AG04450 (cell line): ENCODE measurements at regions of chr3 and their contacts with region 1.

Region 1: DNA sequence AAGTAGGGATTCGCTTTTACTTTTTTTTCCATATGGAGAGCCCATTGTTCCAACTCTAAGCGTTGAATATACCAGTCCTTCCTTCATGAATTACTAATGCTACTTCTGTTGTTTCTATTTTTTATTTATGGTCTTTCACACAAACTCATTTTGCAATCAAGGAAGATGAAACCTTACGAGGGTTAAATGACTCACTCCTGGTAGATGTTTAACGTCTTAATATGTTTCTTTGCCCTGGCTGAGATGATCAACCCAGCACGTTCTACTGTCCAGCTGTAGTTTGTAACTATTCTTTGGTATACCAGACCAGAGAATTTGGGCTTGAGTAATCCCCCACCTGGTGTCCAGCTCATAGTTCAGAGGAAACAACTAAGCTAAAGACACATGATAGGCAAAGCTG is 23.1 kb downstream of the CDCP1 start:
- DNase-seq: peak; percentile 94
- H3K4me3 ChIP-seq: no peak overlapping the region
- H3K27ac ChIP-seq: peak overlapping the region; percentile 97
- H3K27me3 ChIP-seq: no peaks in the 10 kb centered on the region
- CTCF ChIP-seq: no peak

Region 2: GRCh38 chr3:44427683-44428082 is 695.3 kb before region 1 on chr3:
- CTCF ChIA-PET with region 1: no interaction called
- POLR2A ChIA-PET with region 1: interaction called, 14 read pairs
- DNase-seq: no peak
- H3K4me3 ChIP-seq: no peak overlapping the region
- H3K27ac ChIP-seq: no peak overlapping the region
- H3K27me3 ChIP-seq: peaks cover 15% of the 10 kb centered on the region
- CTCF ChIP-seq: no peak

Region 3: GRCh38 chr3:44729384-44729910 is 393.6 kb before region 1 on chr3 and contains the start of gene ZNF501:
- CTCF ChIA-PET with region 1: no interaction called
- POLR2A ChIA-PET with region 1: no interaction called
- DNase-seq: peak; percentile 67
- H3K4me3 ChIP-seq: peak within 1 kb of the TSS; percentile 74
- H3K27ac ChIP-seq: peak within 1 kb of the TSS; percentile 53
- H3K27me3 ChIP-seq: no peaks in the 10 kb centered on the region
- CTCF ChIP-seq: no peak
- polyA plus RNA-seq, gene ZNF501: 3.9 and 4.3 TPM in 2 replicates

Region 4: DNA sequence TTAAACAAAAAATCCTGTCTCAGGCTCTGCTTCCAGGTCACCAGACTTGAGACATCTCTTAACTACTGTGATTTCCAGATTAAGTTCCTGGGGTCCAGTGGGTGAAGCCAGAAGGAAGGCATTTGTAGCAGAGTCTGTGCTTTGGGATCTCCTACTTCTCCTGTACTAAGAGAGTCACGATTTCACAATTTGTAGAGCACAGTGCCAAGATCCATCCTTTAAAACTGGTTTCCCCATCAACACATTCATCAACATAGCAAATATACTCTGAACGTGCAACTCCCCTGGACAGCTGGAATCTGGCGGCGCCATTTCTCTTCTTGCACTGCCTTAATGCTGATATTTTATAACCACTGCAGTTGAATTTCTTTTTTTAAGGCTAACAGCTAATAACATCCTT is 10.1 kb before region 1 on chr3:
- CTCF ChIA-PET with region 1: no interaction called
- POLR2A ChIA-PET with region 1: interaction called, 11 read pairs
- DNase-seq: no peak
- H3K4me3 ChIP-seq: no peak overlapping the region
- H3K27ac ChIP-seq: peak overlapping the region; percentile 3
- H3K27me3 ChIP-seq: no peaks in the 10 kb centered on the region
- CTCF ChIP-seq: no peak

Region 5: DNA sequence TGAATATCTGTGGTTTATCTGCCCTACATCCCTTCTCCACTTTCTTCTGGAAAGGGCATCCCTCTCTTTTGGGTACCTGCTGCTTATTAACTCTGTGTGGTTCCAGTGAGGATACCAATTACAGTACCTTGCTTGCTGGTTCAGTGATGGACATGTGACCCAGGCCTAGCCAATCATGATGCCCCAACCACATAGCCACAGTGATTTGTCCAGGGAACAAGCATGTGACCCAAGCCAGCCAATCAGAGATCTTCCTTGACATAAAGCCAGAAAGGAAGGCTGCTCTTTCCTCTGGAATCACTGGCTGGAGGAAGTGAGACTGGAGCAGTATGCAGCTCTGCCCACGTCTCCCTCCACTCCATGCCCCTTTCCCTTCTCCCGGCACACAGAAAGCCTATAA is 113.9 kb after region 1 on chr3:
- CTCF ChIA-PET with region 1: no interaction called
- POLR2A ChIA-PET with region 1: no interaction called
- DNase-seq: no peak
- H3K4me3 ChIP-seq: no peak overlapping the region
- H3K27ac ChIP-seq: no peak overlapping the region
- H3K27me3 ChIP-seq: peaks cover 4% of the 10 kb centered on the region
- CTCF ChIP-seq: no peak